ENCODE measurements at regions of chr1 and their contacts with region 1.

Region 1: DNA sequence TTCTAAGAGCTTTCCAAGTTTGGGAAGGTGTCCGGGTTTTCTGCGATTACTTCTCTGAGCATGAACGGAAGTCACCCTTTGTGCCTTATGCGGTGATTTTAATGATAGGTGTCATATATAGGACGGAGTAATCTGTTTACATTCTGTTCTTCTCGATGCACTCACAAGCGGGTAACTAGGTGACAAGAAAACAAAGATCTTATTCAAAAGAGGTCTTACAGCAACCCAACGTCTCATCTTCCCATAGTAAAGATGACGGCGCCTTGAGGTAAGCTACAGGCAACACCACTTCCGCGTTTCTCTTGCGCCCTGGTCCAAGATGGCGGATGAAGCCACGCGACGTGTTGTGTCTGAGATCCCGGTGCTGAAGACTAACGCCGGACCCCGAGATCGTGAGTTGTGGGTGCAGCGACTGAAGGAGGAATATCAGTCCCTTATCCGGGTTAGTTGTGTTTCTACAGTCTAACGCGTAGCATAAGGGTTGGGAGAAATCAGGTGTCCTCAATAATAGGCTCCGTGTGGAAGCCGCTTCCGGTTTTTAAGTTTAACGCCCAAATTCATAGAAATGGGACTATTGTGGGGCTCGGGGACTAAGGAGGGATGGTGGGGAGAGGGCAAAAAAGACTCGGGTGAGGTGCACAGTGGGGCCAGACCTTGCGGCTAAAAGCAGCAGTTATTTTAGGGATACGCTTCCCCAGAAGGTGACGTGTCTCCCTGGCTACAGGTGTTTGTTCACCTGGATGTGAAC is at the start of gene UFC1:
- DNase-seq: peak; percentile 90
- ATAC-seq: peak; percentile 95
- H3K4me3 Mint-ChIP-seq: peak within 1 kb of the TSS; percentile 95
- H3K27ac Mint-ChIP-seq: peak within 1 kb of the TSS; percentile 99
- H3K4me1 Mint-ChIP-seq: peaks cover 19% of the 10 kb centered on the region
- H3K27me3 Mint-ChIP-seq: no peaks in the 10 kb centered on the region
- CTCF ChIP-seq: no peak
- total RNA-seq, gene UFC1: 81.2 to 84.1 TPM

Region 2: DNA sequence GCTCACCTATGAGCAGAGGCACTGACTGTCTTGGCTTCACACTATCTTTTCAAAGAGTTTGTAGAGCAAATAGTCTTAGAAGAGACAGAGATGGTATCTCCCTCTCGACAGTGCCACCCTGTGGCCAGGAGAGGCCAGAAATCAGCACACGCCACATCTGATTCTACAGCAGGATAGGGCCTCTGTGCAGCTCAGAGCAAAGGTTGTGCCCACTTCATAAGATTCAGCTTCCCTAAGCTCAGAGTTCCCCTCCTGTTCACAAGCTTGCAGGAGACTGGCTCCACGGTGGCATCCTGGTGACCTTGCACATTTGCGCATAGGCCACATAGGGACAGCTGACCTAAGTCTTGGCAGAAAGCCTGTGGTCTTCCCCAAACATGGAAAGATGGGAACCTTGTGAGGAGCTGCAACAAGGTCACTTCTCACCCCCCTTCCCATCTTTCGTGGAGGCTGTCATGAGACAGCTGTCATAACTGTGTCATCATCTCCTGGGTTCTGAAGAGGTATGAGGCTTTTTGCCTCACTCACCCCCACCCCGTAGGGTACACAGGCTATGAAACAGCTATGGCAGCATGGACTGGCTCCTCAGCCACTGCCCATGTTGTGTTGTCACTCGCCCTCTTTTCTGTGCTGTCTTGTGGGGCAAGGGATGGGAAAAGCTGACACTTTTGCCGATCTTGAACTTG is 202.3 kb before region 1 on chr1:
- CTCF ChIA-PET with region 1: no interaction called
- POLR2A ChIA-PET with region 1: no interaction called
- intact Hi-C with region 1: no loop called
- DNase-seq: peak; percentile 88
- ATAC-seq: peak; percentile 93
- H3K4me3 Mint-ChIP-seq: no peak overlapping the region
- H3K27ac Mint-ChIP-seq: no peak overlapping the region
- H3K4me1 Mint-ChIP-seq: peaks cover 7% of the 10 kb centered on the region
- H3K27me3 Mint-ChIP-seq: no peaks in the 10 kb centered on the region
- CTCF ChIP-seq: peak; percentile 76

Region 3: DNA sequence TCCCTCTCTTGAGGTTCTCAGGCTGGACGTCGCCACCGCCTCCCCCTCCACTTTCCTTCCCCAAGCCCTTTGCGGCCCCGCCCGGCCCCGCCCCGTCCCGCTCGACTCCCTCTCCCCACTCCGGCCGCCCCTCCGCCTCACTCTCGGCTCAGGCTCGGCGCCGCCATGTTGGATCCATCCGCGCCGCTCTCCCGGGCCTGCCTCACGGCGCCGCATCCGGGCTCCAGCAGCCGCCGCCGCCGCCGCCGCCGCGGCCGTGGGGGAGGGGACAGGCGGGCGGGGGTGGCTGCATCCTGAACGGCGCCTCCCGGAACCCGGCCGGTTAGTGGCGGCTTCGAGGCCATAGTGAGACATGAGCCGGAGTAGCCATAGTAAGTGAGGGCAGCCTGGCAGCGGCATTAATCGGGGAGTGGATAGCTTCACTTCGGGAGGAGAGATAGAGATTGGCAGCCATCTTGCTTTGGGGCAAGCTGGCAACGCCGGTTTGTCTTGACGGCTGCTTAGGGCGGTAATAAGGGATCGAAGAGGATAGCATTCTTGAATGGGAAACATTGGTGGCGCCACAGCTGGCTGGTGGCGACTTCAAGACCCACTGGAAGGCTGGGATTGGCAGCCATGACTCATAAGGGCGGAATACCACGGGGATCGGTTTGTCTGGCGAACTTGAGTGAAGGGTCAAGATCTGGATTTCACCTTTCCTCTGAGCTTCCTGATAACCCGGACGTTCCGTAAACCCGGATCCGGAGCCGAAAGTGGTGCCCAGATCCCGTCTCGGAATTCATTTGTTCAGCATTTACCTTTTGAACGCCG is 21.2 kb before region 1 on chr1 and contains the start of gene DEDD:
- CTCF ChIA-PET with region 1: interaction called, 4 read pairs
- POLR2A ChIA-PET with region 1: interaction called, 23 read pairs
- intact Hi-C with region 1: no loop called
- DNase-seq: peak; percentile 95
- ATAC-seq: peak; percentile 95
- H3K4me3 Mint-ChIP-seq: no peak within 1 kb of the TSS
- H3K27ac Mint-ChIP-seq: no peak within 1 kb of the TSS
- H3K4me1 Mint-ChIP-seq: peaks cover 41% of the 10 kb centered on the region
- H3K27me3 Mint-ChIP-seq: no peaks in the 10 kb centered on the region
- CTCF ChIP-seq: no peak
- total RNA-seq, gene DEDD: 30.4 to 37.0 TPM

Region 4: GRCh38 chr1:161177112-161177935 is 23.5 kb after region 1 on chr1 and contains the start of gene B4GALT3:
- CTCF ChIA-PET with region 1: no interaction called
- POLR2A ChIA-PET with region 1: interaction called, 14 read pairs
- intact Hi-C with region 1: no loop called
- DNase-seq: peak; percentile 96
- ATAC-seq: peak; percentile 85
- H3K4me3 Mint-ChIP-seq: peak within 1 kb of the TSS; percentile 97
- H3K27ac Mint-ChIP-seq: peak within 1 kb of the TSS; percentile 99
- H3K4me1 Mint-ChIP-seq: peaks cover 55% of the 10 kb centered on the region
- H3K27me3 Mint-ChIP-seq: no peaks in the 10 kb centered on the region
- CTCF ChIP-seq: no peak
- total RNA-seq, gene B4GALT3: 39.9 to 40.8 TPM